Colonic mucosa (tissue), 4 donors: ENCODE measurements at regions of chr1 and their contacts with region 1.

Region 1: DNA sequence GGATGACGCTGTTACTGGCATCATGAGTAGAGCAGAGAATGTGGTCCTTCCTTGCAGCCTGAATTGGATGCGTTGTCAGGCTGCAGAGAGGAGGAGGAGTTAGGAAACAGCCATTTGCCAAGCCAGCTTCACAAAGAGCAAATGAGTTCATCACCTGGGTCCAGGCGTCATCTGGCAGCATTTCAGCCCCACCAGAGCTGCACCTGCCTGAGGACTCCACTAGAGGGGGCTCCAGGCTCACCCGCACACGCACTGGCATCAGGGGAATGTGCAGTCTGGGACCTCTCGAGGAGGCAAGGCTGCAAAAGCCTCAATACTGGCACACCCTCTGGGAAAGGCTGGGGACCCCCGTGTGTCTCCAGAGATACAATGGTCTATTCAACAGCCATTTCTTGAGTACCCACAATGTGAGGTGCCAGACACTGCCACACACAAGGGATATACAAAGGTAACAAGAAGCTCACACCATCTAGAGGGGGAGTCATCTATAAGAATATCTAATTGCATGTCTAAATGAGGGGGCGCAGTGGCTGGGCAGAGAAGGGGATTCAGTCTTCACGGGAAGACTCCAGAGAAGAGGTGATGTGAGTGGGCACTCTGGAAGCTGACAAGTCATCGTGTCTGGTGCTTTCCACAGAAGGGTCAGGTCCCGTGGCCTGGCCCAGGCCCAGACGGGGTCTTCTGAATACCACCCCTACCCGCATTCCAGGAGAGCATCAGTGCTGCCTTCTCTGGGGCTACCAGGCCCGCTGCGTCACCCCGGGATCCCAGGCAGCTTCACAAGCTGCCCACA is 53.5 kb upstream of the CNTN2 start:
- DNase-seq: peak; percentile 51
- H3K4me3 ChIP-seq: no peak overlapping the region
- H3K27ac ChIP-seq: no peak overlapping the region
- H3K4me1 ChIP-seq: no peaks in the 10 kb centered on the region
- H3K27me3 ChIP-seq: no peaks in the 10 kb centered on the region
- CTCF ChIP-seq: peak; percentile 86

Region 2: GRCh38 chr1:204941421-204942338 is 47.8 kb before region 1 on chr1:
- intact Hi-C with region 1: no loop called
- DNase-seq: peak; percentile 76
- H3K4me3 ChIP-seq: no peak overlapping the region
- H3K27ac ChIP-seq: no peak overlapping the region
- H3K4me1 ChIP-seq: no peaks in the 10 kb centered on the region
- H3K27me3 ChIP-seq: no peaks in the 10 kb centered on the region
- CTCF ChIP-seq: peak; percentile 91

Region 3: GRCh38 chr1:205061665-205062069 is 72.2 kb after region 1 on chr1:
- intact Hi-C with region 1: loop called (anchors 5 kb)
- DNase-seq: peak; percentile 76
- H3K4me3 ChIP-seq: no peak overlapping the region
- H3K27ac ChIP-seq: no peak overlapping the region
- H3K4me1 ChIP-seq: no peaks in the 10 kb centered on the region
- H3K27me3 ChIP-seq: no peaks in the 10 kb centered on the region
- CTCF ChIP-seq: peak; percentile 75

Region 4: GRCh38 chr1:205141236-205142101 is 152.0 kb after region 1 on chr1:
- intact Hi-C with region 1: loop called (anchors 5 kb)
- DNase-seq: peak; percentile 80
- H3K4me3 ChIP-seq: no peak overlapping the region
- H3K27ac ChIP-seq: no peak overlapping the region
- H3K4me1 ChIP-seq: peaks cover 6% of the 10 kb centered on the region
- H3K27me3 ChIP-seq: no peaks in the 10 kb centered on the region
- CTCF ChIP-seq: peak; percentile 76

Region 5: GRCh38 chr1:205249651-205250050 is 260.2 kb after region 1 on chr1:
- intact Hi-C with region 1: loop called (anchors 5 kb)
- DNase-seq: no peak
- H3K4me3 ChIP-seq: no peak overlapping the region
- H3K27ac ChIP-seq: no peak overlapping the region
- H3K4me1 ChIP-seq: no peaks in the 10 kb centered on the region
- H3K27me3 ChIP-seq: no peaks in the 10 kb centered on the region
- CTCF ChIP-seq: no peak

Region 6: GRCh38 chr1:205284343-205285144 is 295.1 kb after region 1 on chr1:
- intact Hi-C with region 1: no loop called
- DNase-seq: peak; percentile 75
- H3K4me3 ChIP-seq: no peak overlapping the region
- H3K27ac ChIP-seq: peak overlapping the region; percentile 31
- H3K4me1 ChIP-seq: peaks cover 17% of the 10 kb centered on the region
- H3K27me3 ChIP-seq: no peaks in the 10 kb centered on the region
- CTCF ChIP-seq: no peak

Region 7: GRCh38 chr1:205354259-205354904 is 364.9 kb after region 1 on chr1:
- intact Hi-C with region 1: no loop called
- DNase-seq: peak; percentile 77
- H3K4me3 ChIP-seq: no peak overlapping the region
- H3K27ac ChIP-seq: peak overlapping the region; percentile 52
- H3K4me1 ChIP-seq: no peaks in the 10 kb centered on the region
- H3K27me3 ChIP-seq: no peaks in the 10 kb centered on the region
- CTCF ChIP-seq: peak; percentile 74